GM12878 (cell line): ENCODE measurements at regions of chr22 and their contacts with region 1.

Region 1: DNA sequence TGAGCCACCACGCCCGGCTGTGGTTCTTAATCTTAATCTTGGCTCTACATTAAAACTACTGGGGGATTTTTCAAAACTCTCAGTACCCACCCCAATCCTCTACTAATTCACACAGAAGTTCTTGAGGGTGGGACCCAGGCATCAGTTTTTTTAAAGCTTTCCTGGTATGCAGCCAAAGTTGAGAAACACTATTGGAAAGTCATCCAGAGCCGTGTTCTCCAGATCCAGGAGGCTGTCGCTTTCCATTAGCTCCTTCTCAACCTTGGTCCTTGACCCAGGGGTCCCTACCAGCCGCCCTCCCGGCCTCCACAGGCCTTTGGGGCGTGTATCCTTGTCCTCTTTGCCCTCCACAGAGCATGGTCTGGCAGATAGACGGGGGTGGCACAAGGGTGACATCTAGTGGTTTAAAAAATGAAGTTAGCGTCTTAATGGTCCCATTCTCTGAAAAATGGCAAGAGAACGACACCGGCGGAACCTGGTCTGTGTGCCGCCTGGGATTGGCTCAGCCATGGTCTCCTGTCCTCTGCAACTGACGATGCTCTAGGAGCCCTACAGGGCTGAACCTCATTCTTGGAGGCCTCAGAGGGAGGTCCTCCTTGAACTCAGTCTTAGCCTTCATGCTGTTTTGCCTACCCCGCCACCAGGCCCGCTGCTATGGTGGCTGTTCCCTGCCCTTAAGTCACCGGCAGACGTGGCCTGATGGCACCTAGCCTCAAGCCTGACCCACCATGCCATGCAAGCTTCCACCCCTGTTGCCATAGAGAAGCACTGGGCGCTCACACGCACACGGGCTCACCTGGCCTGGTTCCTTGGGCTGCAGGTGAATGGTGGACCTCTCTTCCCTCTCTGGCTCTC is 152.0 kb upstream of the SYN3 start:
- DNase-seq: no peak
- ATAC-seq: peak; percentile 98
- H3K4me3 ChIP-seq: no peak overlapping the region
- H3K27ac ChIP-seq: no peak overlapping the region
- H3K4me1 ChIP-seq: no peaks in the 10 kb centered on the region
- H3K27me3 ChIP-seq: no peaks in the 10 kb centered on the region
- CTCF ChIP-seq: peak; percentile 69 to 72 (median 70)
- EP300 ChIP-seq: no peak
- POLR2A ChIP-seq: no peak
- RAD21 ChIP-seq: peak; percentile 77

Region 2: GRCh38 chr22:33083212-33083611 is 126.9 kb before region 1 on chr22:
- CTCF ChIA-PET with region 1: interaction called, 57 read pairs
- POLR2A ChIA-PET with region 1: no interaction called
- RAD21 ChIA-PET with region 1: interaction called, 4 read pairs
- SMC1A ChIA-PET with region 1: interaction called, 9 read pairs
- in situ Hi-C with region 1: no loop called
- intact Hi-C with region 1: no loop called
- DNase-seq: peak; percentile 13
- ATAC-seq: peak; percentile 80
- H3K4me3 ChIP-seq: no peak overlapping the region
- H3K27ac ChIP-seq: no peak overlapping the region
- H3K4me1 ChIP-seq: no peaks in the 10 kb centered on the region
- H3K27me3 ChIP-seq: no peaks in the 10 kb centered on the region
- CTCF ChIP-seq: peak in 1 of 3 experiments; percentile 36; a peak in 4 of 6 replicates
- EP300 ChIP-seq: no peak
- POLR2A ChIP-seq: no peak
- RAD21 ChIP-seq: 0 out of 2 replicates have a peak, but pooled peaks have one; percentile 25

Region 3: DNA sequence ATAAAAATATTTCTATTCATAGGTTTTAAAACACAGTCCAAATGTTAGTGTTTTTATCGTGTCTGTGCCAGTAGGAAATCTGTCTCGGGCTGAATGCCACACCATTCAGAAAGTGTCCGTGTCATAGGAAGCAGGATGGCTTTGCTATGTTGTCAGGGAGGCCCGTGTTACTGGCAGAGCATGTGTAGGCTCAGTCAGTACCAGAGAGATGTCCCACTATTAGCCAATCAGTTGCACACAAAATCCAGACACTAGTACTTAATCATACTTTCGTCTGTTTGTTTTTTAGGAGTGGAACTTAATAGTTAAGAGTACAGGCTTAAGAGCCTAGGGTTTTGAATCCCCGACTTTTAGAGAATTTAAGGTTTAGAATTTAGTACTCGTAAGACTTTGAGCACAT is 121.7 kb before region 1 on chr22:
- CTCF ChIA-PET with region 1: interaction called, 57 read pairs
- POLR2A ChIA-PET with region 1: no interaction called
- RAD21 ChIA-PET with region 1: interaction called, 4 read pairs
- SMC1A ChIA-PET with region 1: interaction called, 9 read pairs
- in situ Hi-C with region 1: no loop called
- intact Hi-C with region 1: no loop called
- DNase-seq: no peak
- ATAC-seq: no peak
- H3K4me3 ChIP-seq: no peak overlapping the region
- H3K27ac ChIP-seq: no peak overlapping the region
- H3K4me1 ChIP-seq: no peaks in the 10 kb centered on the region
- H3K27me3 ChIP-seq: no peaks in the 10 kb centered on the region
- CTCF ChIP-seq: no peak
- EP300 ChIP-seq: no peak
- POLR2A ChIP-seq: no peak
- RAD21 ChIP-seq: no peak

Region 4: DNA sequence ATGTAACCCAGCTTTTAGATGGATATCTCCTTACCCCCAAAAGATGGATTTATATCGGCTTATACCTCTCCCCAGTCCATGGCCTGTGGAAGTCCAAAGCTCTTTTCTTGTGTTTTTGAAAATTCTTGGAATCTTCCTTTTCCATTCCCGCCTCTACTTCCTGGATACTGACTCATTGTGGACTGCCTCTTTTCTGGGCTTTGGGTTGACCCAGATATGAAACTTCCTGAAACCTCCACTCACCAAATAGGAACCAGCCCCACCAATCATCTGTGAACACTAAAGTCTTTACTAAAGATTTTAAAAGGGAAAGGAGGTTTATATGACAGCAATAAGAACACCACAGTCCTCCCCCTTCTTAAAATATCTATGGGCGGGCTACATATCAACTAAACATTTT is 11.4 kb after region 1 on chr22:
- CTCF ChIA-PET with region 1: interaction called, 12 read pairs
- POLR2A ChIA-PET with region 1: no interaction called
- RAD21 ChIA-PET with region 1: no interaction called
- SMC1A ChIA-PET with region 1: interaction called, 4 read pairs
- in situ Hi-C with region 1: no loop called
- intact Hi-C with region 1: no loop called
- DNase-seq: no peak
- ATAC-seq: no peak
- H3K4me3 ChIP-seq: no peak overlapping the region
- H3K27ac ChIP-seq: no peak overlapping the region
- H3K4me1 ChIP-seq: no peaks in the 10 kb centered on the region
- H3K27me3 ChIP-seq: no peaks in the 10 kb centered on the region
- CTCF ChIP-seq: no peak
- EP300 ChIP-seq: no peak
- POLR2A ChIP-seq: no peak
- RAD21 ChIP-seq: no peak

Region 5: DNA sequence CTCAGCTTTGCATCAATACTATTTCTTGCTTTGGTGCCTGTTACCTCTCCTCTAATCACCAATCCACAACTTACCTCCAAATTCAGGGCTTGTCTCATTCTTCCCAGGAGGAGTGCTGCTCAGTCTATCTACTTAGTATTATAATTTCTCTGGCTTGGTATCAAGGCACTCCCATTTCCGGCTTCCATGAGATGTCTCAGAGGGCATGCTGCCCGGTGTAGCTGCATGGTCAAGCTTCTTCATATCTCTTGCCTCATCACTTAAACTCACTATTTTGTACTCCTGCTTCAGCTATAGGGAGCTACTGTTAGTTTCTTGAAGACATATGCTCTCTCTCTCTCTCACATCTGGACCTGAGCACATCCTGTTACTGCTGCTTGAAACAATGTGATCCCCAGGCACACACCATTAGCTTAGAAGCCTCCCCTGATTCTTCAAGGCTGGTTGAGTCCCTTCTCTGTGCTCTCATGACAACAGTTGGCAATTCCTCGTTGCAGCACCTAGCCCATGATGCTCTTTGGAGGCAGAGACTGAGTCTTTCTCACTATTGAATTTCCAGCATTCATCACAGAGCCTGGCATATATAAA is 30.8 kb after region 1 on chr22:
- CTCF ChIA-PET with region 1: interaction called, 10 read pairs
- POLR2A ChIA-PET with region 1: no interaction called
- RAD21 ChIA-PET with region 1: interaction called, 6 read pairs
- SMC1A ChIA-PET with region 1: interaction called, 4 read pairs
- in situ Hi-C with region 1: no loop called
- intact Hi-C with region 1: no loop called
- DNase-seq: no peak
- ATAC-seq: no peak
- H3K4me3 ChIP-seq: no peak overlapping the region
- H3K27ac ChIP-seq: no peak overlapping the region; the same call in 1 of the 2 replicates
- H3K4me1 ChIP-seq: peaks cover 25% of the 10 kb centered on the region
- H3K27me3 ChIP-seq: no peaks in the 10 kb centered on the region
- CTCF ChIP-seq: no peak
- EP300 ChIP-seq: no peak
- POLR2A ChIP-seq: no peak
- RAD21 ChIP-seq: no peak